ENCODE measurements at regions of chr16 and their contacts with region 1.

Region 1: DNA sequence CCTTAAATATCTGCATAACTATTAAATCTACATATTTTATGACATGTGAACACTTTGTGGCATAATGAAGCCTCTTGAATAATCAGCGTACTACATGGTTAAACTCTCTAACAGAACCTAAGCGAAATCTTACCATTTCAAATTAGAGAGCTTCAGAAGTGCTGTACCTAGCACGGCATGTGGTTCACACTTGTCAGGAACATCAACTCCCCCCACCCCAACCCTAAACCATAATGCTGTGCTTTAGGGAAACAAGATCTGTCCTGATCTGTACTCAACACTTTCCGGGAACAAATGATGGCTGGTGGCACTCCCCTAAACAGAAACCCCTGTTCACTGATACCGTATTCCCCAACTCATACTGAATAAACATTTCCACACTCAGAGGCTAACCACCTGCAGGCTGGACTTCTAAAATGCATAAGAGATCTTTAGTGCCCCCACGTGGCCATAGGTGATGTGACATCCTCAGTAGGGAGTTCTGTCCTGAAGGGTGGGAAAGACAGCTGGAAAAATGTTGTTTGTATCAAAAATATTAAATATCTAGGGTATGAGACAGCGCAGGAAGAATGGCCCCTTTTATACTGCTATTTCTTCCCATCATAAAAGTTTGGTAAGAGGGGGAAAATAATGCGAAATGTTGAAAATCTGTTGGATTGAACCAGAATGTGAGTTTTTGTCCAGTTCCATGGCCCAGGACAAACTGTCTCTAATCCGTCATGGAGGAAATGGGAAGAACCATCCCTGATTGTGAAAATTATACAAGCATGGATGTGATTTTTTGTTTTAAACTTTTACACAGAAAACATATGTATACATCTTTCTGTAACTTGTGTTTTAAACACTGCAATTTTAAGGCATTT is 88.6 kb downstream of the USP31 start:
- DNase-seq: no peak
- H3K4me3 ChIP-seq: no peak overlapping the region
- CTCF ChIP-seq: peak; percentile 80

Region 2: GRCh38 chr16:23072084-23072599 is 11.5 kb after region 1 on chr16:
- CTCF ChIA-PET with region 1: interaction called, 34 read pairs
- POLR2A ChIA-PET with region 1: no interaction called
- DNase-seq: no peak
- H3K4me3 ChIP-seq: no peak overlapping the region
- CTCF ChIP-seq: no peak

Measured in AG04449 (cell line).